GM12878 (cell line): ENCODE measurements at regions of chr13 and their contacts with region 1.

Region 1: GRCh38 chr13:60627071-60627686 is 230.2 kb downstream of the TDRD3 start:
- DNase-seq: no peak
- ATAC-seq: peak; percentile 95
- H3K4me3 ChIP-seq: no peak overlapping the region
- H3K27ac ChIP-seq: no peak overlapping the region
- H3K4me1 ChIP-seq: no peaks in the 10 kb centered on the region
- H3K27me3 ChIP-seq: no peaks in the 10 kb centered on the region
- CTCF ChIP-seq: peak; percentile 62 to 70 (median 69)
- EP300 ChIP-seq: no peak
- POLR2A ChIP-seq: no peak
- RAD21 ChIP-seq: peak; percentile 76

Region 2: GRCh38 chr13:59970847-59971246 is 656.3 kb before region 1 on chr13:
- CTCF ChIA-PET with region 1: no interaction called
- POLR2A ChIA-PET with region 1: no interaction called
- RAD21 ChIA-PET with region 1: no interaction called
- SMC1A ChIA-PET with region 1: no interaction called
- in situ Hi-C with region 1: no loop called
- intact Hi-C with region 1: no loop called
- DNase-seq: no peak
- ATAC-seq: no peak
- H3K4me3 ChIP-seq: no peak overlapping the region
- H3K27ac ChIP-seq: no peak overlapping the region
- H3K4me1 ChIP-seq: no peaks in the 10 kb centered on the region
- H3K27me3 ChIP-seq: no peaks in the 10 kb centered on the region
- CTCF ChIP-seq: no peak
- EP300 ChIP-seq: no peak
- POLR2A ChIP-seq: no peak
- RAD21 ChIP-seq: no peak

Region 3: GRCh38 chr13:60745343-60745742 is 118.2 kb after region 1 on chr13:
- CTCF ChIA-PET with region 1: no interaction called
- POLR2A ChIA-PET with region 1: no interaction called
- RAD21 ChIA-PET with region 1: no interaction called
- SMC1A ChIA-PET with region 1: no interaction called
- in situ Hi-C with region 1: no loop called
- intact Hi-C with region 1: no loop called
- DNase-seq: no peak
- ATAC-seq: no peak
- H3K4me3 ChIP-seq: no peak overlapping the region
- H3K27ac ChIP-seq: no peak overlapping the region
- H3K4me1 ChIP-seq: no peaks in the 10 kb centered on the region
- H3K27me3 ChIP-seq: no peaks in the 10 kb centered on the region
- CTCF ChIP-seq: no peak
- EP300 ChIP-seq: no peak
- POLR2A ChIP-seq: no peak
- RAD21 ChIP-seq: no peak

Region 4: GRCh38 chr13:61954092-61954491 is 1326.9 kb after region 1 on chr13:
- CTCF ChIA-PET with region 1: interaction called, 7 read pairs
- POLR2A ChIA-PET with region 1: no interaction called
- RAD21 ChIA-PET with region 1: no interaction called
- SMC1A ChIA-PET with region 1: no interaction called
- in situ Hi-C with region 1: no loop called
- intact Hi-C with region 1: loop called (anchors 10 kb)
- DNase-seq: no peak
- ATAC-seq: no peak
- H3K4me3 ChIP-seq: no peak overlapping the region
- H3K27ac ChIP-seq: no peak overlapping the region
- H3K4me1 ChIP-seq: no peaks in the 10 kb centered on the region
- H3K27me3 ChIP-seq: no peaks in the 10 kb centered on the region
- CTCF ChIP-seq: peak in 1 of 3 experiments; percentile 37; a peak in 1 of 6 replicates
- EP300 ChIP-seq: no peak
- POLR2A ChIP-seq: no peak
- RAD21 ChIP-seq: peak; percentile 71